ENCODE measurements at regions of chr2 and their contacts with region 1.

Region 1: GRCh38 chr2:85678794-85679672 is 11.0 kb upstream of the SFTPB start:
- DNase-seq: peak; percentile 83
- H3K4me3 Mint-ChIP-seq: no peak overlapping the region
- H3K27ac Mint-ChIP-seq: no peak overlapping the region
- H3K4me1 Mint-ChIP-seq: no peaks in the 10 kb centered on the region
- H3K27me3 Mint-ChIP-seq: no peaks in the 10 kb centered on the region

Region 2: DNA sequence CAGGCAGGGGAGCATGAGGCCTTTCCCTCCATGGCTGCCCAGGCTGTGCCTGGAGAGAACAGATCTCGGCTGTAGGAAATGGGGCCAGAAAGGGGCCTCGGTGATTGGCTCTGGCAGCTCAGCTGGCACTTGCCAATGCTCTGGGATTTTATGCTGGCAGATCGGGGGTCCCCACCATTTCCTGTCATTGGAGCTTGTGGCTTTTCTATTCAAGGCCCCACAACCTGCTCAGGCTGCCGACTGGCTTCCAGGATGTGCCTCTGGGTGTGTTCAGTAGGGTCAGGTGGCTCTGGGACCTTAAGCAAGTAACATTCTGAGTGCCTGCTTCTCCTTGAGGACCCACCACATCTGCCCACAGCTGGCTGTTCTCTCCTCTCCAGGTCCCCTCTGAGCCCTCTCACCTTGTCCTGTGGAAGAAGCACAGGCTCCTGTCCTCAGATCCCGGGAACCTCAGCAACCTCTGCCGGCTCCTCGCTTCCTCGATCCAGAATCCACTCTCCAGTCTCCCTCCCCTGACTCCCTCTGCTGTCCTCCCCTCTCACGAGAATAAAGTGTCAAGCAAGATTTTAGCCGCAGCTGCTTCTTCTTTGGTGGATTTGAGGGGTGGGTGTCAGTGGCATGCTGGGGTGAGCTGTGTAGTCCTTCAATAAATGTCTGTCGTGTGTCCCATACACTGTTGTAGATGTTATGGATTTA is 19.3 kb after region 1 on chr2:
- CTCF ChIA-PET with region 1: interaction called, 68 read pairs
- intact Hi-C with region 1: no loop called
- DNase-seq: no peak
- H3K4me3 Mint-ChIP-seq: no peak overlapping the region
- H3K27ac Mint-ChIP-seq: no peak overlapping the region
- H3K4me1 Mint-ChIP-seq: peaks cover 16% of the 10 kb centered on the region
- H3K27me3 Mint-ChIP-seq: no peaks in the 10 kb centered on the region

Region 3: GRCh38 chr2:85813982-85814801 is 135.2 kb after region 1 on chr2:
- CTCF ChIA-PET with region 1: interaction called, 13 read pairs
- intact Hi-C with region 1: loop called (anchors 1 kb)
- DNase-seq: peak; percentile 92
- H3K4me3 Mint-ChIP-seq: no peak overlapping the region
- H3K27ac Mint-ChIP-seq: no peak overlapping the region
- H3K4me1 Mint-ChIP-seq: no peaks in the 10 kb centered on the region
- H3K27me3 Mint-ChIP-seq: peaks cover 1% of the 10 kb centered on the region

Region 4: GRCh38 chr2:86263715-86264562 is 584.9 kb after region 1 on chr2:
- CTCF ChIA-PET with region 1: no interaction called
- intact Hi-C with region 1: no loop called
- DNase-seq: no peak
- H3K4me3 Mint-ChIP-seq: no peak overlapping the region
- H3K27ac Mint-ChIP-seq: no peak overlapping the region
- H3K4me1 Mint-ChIP-seq: no peaks in the 10 kb centered on the region
- H3K27me3 Mint-ChIP-seq: peaks cover 3% of the 10 kb centered on the region